Endothelial cell of umbilical vein (primary cell): ENCODE measurements at regions of chr1 and their contacts with region 1.

Region 1: GRCh38 chr1:175373786-175374623 is 181.4 kb upstream of the KIAA0040 start:
- DNase-seq: peak; percentile 38
- H3K4me3 ChIP-seq: no peak overlapping the region
- H3K27ac ChIP-seq: no peak overlapping the region
- H3K4me1 ChIP-seq: no peaks in the 10 kb centered on the region
- H3K27me3 ChIP-seq: peaks cover 0 to 3% of the 10 kb centered on the region in 2 experiments
- CTCF ChIP-seq: peak; percentile 73 to 82
- POLR2A ChIP-seq: no peak

Region 2: GRCh38 chr1:175742790-175743459 is 368.9 kb after region 1 on chr1:
- CTCF ChIA-PET with region 1: interaction called, 16 read pairs
- POLR2A ChIA-PET with region 1: no interaction called
- dilution Hi-C with region 1: no loop called
- intact Hi-C with region 1: loop called (anchors 5 kb)
- DNase-seq: peak; percentile 55
- H3K4me3 ChIP-seq: no peak overlapping the region
- H3K27ac ChIP-seq: no peak overlapping the region
- H3K4me1 ChIP-seq: no peaks in the 10 kb centered on the region
- H3K27me3 ChIP-seq: peaks cover 2 to 5% of the 10 kb centered on the region in 2 experiments
- CTCF ChIP-seq: no peak
- POLR2A ChIP-seq: no peak

Region 3: DNA sequence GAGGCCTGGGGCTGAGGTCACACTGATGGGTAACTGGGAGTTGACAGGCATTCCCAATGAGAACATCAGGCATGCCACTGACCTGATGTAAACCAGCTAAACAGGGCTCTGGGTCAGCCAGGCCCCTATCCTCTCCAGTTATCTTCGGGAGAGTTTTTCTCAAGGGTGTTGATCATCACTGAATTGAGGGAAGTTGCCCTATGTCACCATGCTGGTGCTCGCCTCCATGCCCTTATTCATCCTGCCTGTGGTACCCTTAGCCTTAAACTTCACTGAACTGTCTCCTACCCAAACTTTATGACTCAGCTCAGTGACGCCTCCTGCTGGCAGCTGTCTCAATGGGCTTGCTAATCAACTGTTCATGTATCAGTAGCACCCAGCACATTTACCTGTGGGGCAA is 450.1 kb after region 1 on chr1:
- CTCF ChIA-PET with region 1: interaction called, 30 read pairs
- POLR2A ChIA-PET with region 1: no interaction called
- dilution Hi-C with region 1: no loop called
- intact Hi-C with region 1: loop called (anchors 1 kb)
- DNase-seq: peak; percentile 41
- H3K4me3 ChIP-seq: no peak overlapping the region
- H3K27ac ChIP-seq: no peak overlapping the region
- H3K4me1 ChIP-seq: no peaks in the 10 kb centered on the region
- H3K27me3 ChIP-seq: no peaks in the 10 kb centered on the region
- CTCF ChIP-seq: peak; percentile 50 to 54
- POLR2A ChIP-seq: no peak

Region 4: GRCh38 chr1:176073524-176074157 is 699.6 kb after region 1 on chr1:
- CTCF ChIA-PET with region 1: interaction called, 29 read pairs
- POLR2A ChIA-PET with region 1: no interaction called
- dilution Hi-C with region 1: no loop called
- intact Hi-C with region 1: loop called (anchors 1 kb)
- DNase-seq: peak; percentile 78
- H3K4me3 ChIP-seq: no peak overlapping the region
- H3K27ac ChIP-seq: no peak overlapping the region
- H3K4me1 ChIP-seq: no peaks in the 10 kb centered on the region
- H3K27me3 ChIP-seq: no peaks in the 10 kb centered on the region
- CTCF ChIP-seq: peak; percentile 52 to 56
- POLR2A ChIP-seq: no peak

Region 5: DNA sequence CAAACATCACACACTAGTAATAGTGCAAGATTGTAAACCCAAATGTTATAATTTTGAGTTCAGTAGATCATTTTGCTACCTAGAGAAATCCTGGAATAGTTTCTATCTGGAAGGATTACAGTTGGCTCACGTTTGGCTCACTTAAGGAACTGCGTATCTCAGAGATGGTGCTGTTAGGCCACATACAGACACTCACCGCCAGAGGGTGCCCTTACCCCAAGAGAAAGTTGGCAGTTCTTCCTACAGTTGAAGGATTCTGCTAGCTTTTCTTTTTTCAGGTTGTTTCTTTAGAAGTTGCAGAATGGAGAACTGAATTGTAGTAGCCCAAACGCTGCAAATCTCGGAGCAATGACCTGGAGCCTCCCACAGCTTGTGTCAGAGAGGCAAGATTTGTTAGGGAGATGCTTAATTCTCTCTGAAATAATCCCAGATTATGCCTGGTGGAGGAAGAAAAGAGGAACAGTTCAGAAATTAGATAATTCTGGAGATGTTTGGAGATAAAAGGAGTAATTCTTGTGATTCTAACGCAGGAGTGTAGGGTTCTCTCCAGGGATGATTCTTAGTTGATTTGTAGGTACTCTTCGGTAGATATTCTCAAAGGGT is 1001.1 kb after region 1 on chr1:
- CTCF ChIA-PET with region 1: interaction called, 9 read pairs
- POLR2A ChIA-PET with region 1: no interaction called
- dilution Hi-C with region 1: no loop called
- intact Hi-C with region 1: loop called (anchors 1 kb)
- DNase-seq: peak; percentile 62
- H3K4me3 ChIP-seq: no peak overlapping the region
- H3K27ac ChIP-seq: no peak overlapping the region
- H3K4me1 ChIP-seq: no peaks in the 10 kb centered on the region
- H3K27me3 ChIP-seq: no peaks in the 10 kb centered on the region
- CTCF ChIP-seq: peak; percentile 81 to 83
- POLR2A ChIP-seq: no peak